T-cell (primary cell): ENCODE measurements at regions of chr6 and their contacts with region 1.

Region 1: DNA sequence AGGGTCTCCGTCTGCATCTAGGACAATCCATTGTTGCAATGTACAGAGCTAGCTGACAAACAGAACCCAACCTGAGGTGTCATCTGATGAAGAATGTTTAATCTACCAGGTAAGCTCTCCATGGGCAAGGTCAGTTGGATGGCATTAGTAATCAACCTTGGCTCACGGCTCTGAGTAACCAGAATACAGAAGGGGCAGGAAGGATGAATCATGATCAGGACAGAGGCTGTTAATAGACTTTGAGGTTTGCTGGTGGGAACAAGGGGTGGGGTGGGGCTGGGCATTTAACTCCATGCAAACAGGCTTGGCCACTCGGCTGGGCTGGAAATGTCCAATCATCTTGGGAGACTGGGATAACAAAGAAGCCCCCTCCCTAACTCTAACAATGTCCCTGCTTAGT is 77.1 kb upstream of the MRPS10 start:
- DNase-seq: peak in 1 of 35 experiments; percentile 16
- ATAC-seq: no peak
- H3K4me3 ChIP-seq: no peak overlapping the region
- H3K4me3 Mint-ChIP-seq: peak overlapping the region in 2 of 3 donors; percentile 5 to 58
- H3K27ac ChIP-seq: peak overlapping the region; percentile 44
- H3K27ac Mint-ChIP-seq: peak overlapping the region; percentile 83 to 89
- H3K4me1 ChIP-seq: peaks cover 33 to 51% of the 10 kb centered on the region in 2 experiments
- H3K4me1 Mint-ChIP-seq: peaks cover 54 to 70% (median 62%) of the 10 kb centered on the region in 3 donors
- H3K27me3 ChIP-seq: no peaks in the 10 kb centered on the region
- H3K27me3 Mint-ChIP-seq: no peaks in the 10 kb centered on the region

Region 2: GRCh38 chr6:42086046-42087035 is 208.4 kb before region 1 on chr6:
- CTCF ChIA-PET with region 1: no interaction called
- POLR2A ChIA-PET with region 1: no interaction called
- DNase-seq: no peak
- ATAC-seq: no peak
- H3K4me3 ChIP-seq: no peak overlapping the region
- H3K4me3 Mint-ChIP-seq: no peak overlapping the region
- H3K27ac ChIP-seq: no peak overlapping the region
- H3K27ac Mint-ChIP-seq: no peak overlapping the region
- H3K4me1 ChIP-seq: no peaks in the 10 kb centered on the region
- H3K4me1 Mint-ChIP-seq: no peaks in the 10 kb centered on the region
- H3K27me3 ChIP-seq: no peaks in the 10 kb centered on the region
- H3K27me3 Mint-ChIP-seq: no peaks in the 10 kb centered on the region

Region 3: GRCh38 chr6:42224222-42224989 is 70.4 kb before region 1 on chr6:
- CTCF ChIA-PET with region 1: no interaction called
- POLR2A ChIA-PET with region 1: no interaction called
- DNase-seq: no peak
- ATAC-seq: peak in 2 of 4 experiments; percentile 51 to 80
- H3K4me3 ChIP-seq: no peak overlapping the region
- H3K4me3 Mint-ChIP-seq: no peak overlapping the region
- H3K27ac ChIP-seq: no peak overlapping the region
- H3K27ac Mint-ChIP-seq: peak overlapping the region; percentile 48 to 49
- H3K4me1 ChIP-seq: no peaks in the 10 kb centered on the region
- H3K4me1 Mint-ChIP-seq: peaks cover 0 to 7% (median 6%) of the 10 kb centered on the region in 3 donors
- H3K27me3 ChIP-seq: no peaks in the 10 kb centered on the region
- H3K27me3 Mint-ChIP-seq: no peaks in the 10 kb centered on the region

Region 4: DNA sequence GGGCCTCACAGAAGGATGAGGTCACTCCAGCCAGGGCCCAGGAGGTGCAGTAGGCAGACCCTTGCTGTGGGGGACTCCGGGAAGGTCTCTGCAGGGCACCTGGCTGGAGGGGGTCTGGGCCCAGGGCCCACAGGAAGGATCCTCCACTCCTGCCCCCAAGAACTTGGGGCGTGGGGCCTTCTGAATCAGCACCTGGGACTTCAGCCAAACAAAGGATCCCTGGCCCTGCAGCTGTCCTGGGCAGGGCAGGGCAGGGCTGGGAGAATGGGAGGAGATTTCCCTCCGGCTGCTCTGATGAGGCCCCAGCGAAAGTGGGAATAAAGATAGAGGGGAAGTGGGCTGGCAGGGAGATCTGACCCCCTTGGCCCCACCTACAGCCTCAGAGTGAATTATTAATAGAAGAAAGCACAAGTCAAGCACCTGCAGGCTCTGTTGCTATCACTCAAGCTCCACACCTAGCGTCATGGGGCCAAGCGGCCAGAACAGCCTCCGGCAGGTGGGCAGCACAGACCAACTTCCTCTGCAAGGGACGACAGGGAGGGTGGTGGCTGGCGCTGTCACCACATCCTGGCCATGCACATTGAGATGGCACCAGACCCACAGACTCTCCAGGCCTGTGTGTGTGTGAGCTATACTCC is 15.5 kb before region 1 on chr6:
- CTCF ChIA-PET with region 1: interaction called in 1 of 2 experiments, 5 read pairs
- POLR2A ChIA-PET with region 1: interaction called, 3 to 11 read pairs
- DNase-seq: peak in 29 of 35 experiments; percentile 6 to 48 (median 28)
- ATAC-seq: peak; percentile 23 to 68 (median 54)
- H3K4me3 ChIP-seq: peak overlapping the region in 1 of 2 donors; percentile 25
- H3K4me3 Mint-ChIP-seq: peak overlapping the region; percentile 10 to 67 (median 21)
- H3K27ac ChIP-seq: peak overlapping the region; percentile 54
- H3K27ac Mint-ChIP-seq: peak overlapping the region; percentile 72 to 87
- H3K4me1 ChIP-seq: peaks cover 31 to 54% of the 10 kb centered on the region in 2 experiments
- H3K4me1 Mint-ChIP-seq: peaks cover 54 to 66% (median 57%) of the 10 kb centered on the region in 3 donors
- H3K27me3 ChIP-seq: no peaks in the 10 kb centered on the region
- H3K27me3 Mint-ChIP-seq: no peaks in the 10 kb centered on the region

Region 5: GRCh38 chr6:42352856-42353564 is 58.3 kb after region 1 on chr6:
- CTCF ChIA-PET with region 1: no interaction called
- POLR2A ChIA-PET with region 1: interaction called in 1 of 2 experiments, 10 read pairs
- DNase-seq: no peak
- ATAC-seq: no peak
- H3K4me3 ChIP-seq: no peak overlapping the region
- H3K4me3 Mint-ChIP-seq: no peak overlapping the region
- H3K27ac ChIP-seq: no peak overlapping the region
- H3K27ac Mint-ChIP-seq: no peak overlapping the region
- H3K4me1 ChIP-seq: peaks cover 0 to 12% of the 10 kb centered on the region in 2 experiments
- H3K4me1 Mint-ChIP-seq: peaks cover 4 to 24% (median 10%) of the 10 kb centered on the region in 3 donors
- H3K27me3 ChIP-seq: no peaks in the 10 kb centered on the region
- H3K27me3 Mint-ChIP-seq: no peaks in the 10 kb centered on the region

Region 6: GRCh38 chr6:42571611-42572342 is 277.0 kb after region 1 on chr6:
- CTCF ChIA-PET with region 1: no interaction called
- POLR2A ChIA-PET with region 1: interaction called in 1 of 2 experiments, 15 read pairs
- DNase-seq: no peak
- ATAC-seq: peak in 1 of 4 experiments; percentile 15
- H3K4me3 ChIP-seq: no peak overlapping the region
- H3K4me3 Mint-ChIP-seq: peak overlapping the region; percentile 36 to 49 (median 45)
- H3K27ac ChIP-seq: peak overlapping the region; percentile 8
- H3K27ac Mint-ChIP-seq: peak overlapping the region; percentile 46 to 58
- H3K4me1 ChIP-seq: peaks cover 12 to 27% of the 10 kb centered on the region in 2 experiments
- H3K4me1 Mint-ChIP-seq: peaks cover 69 to 71% (median 69%) of the 10 kb centered on the region in 3 donors
- H3K27me3 ChIP-seq: no peaks in the 10 kb centered on the region
- H3K27me3 Mint-ChIP-seq: no peaks in the 10 kb centered on the region

Region 7: GRCh38 chr6:44172731-44173500 is 1878.2 kb after region 1 on chr6:
- CTCF ChIA-PET with region 1: no interaction called
- POLR2A ChIA-PET with region 1: no interaction called
- DNase-seq: peak; percentile 35 to 82 (median 68)
- ATAC-seq: peak; percentile 71 to 92 (median 86)
- H3K4me3 ChIP-seq: no peak overlapping the region
- H3K4me3 Mint-ChIP-seq: no peak overlapping the region
- H3K27ac ChIP-seq: no peak overlapping the region
- H3K27ac Mint-ChIP-seq: peak overlapping the region in 1 of 2 donors; percentile 44
- H3K4me1 ChIP-seq: peaks cover 0 to 17% of the 10 kb centered on the region in 2 experiments
- H3K4me1 Mint-ChIP-seq: peaks cover 6 to 25% (median 9%) of the 10 kb centered on the region in 3 donors
- H3K27me3 ChIP-seq: peaks cover 0 to 37% of the 10 kb centered on the region in 2 experiments
- H3K27me3 Mint-ChIP-seq: peaks cover 2 to 7% of the 10 kb centered on the region in 2 donors